Adrenal gland (tissue), 19 donors: ENCODE measurements at regions of chr1 and their contacts with region 1.

Region 1: GRCh38 chr1:52913537-52913936 is 8.0 kb downstream of the ECHDC2 start:
- DNase-seq: no peak
- H3K4me3 ChIP-seq: no peak overlapping the region
- H3K27ac ChIP-seq: no peak overlapping the region
- H3K4me1 ChIP-seq: peaks cover 18 to 21% of the 10 kb centered on the region in 2 donors
- H3K27me3 ChIP-seq: no peaks in the 10 kb centered on the region
- CTCF ChIP-seq: no peak
- POLR2A ChIP-seq: no peak

Region 2: DNA sequence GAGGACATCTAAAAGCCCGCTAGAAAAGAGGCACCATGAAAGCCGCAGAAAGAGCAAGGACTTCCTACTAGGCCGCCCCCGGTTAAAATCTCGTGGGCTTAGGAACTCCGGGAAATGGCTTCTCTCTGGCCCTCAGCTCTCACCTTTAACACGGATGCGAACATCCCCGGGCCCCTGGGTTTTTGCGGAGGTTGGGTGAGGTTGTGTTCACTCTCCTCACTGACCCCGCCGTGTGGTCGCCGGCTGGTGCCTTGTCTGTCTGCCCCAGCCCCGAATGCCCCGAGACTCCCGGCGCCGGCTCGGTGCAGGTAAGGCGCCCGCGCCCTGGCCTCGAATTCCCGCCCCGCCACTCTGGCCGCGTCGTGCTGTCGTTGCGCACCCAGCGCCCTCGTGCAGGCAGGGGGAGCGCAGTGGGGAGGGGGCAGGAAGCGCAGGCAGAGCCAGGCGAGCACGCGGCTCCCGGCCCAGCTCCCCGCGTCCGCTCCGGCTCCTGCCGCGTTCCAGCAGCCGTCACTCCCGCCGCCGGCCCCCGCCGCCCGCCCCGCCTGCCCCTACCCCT is 280.7 kb before region 1 on chr1 and contains the start of gene SHISAL2A:
- intact Hi-C with region 1: no loop called
- DNase-seq: peak in 6 of 7 donors; percentile 29 to 58 (median 40)
- H3K4me3 ChIP-seq: peak within 1 kb of the TSS in 2 of 4 donors; percentile 18 to 59
- H3K27ac ChIP-seq: peak within 1 kb of the TSS in 2 of 5 donors; percentile 17 to 30
- H3K4me1 ChIP-seq: peaks cover 4 to 15% of the 10 kb centered on the region in 2 donors
- H3K27me3 ChIP-seq: peaks cover 13% of the 10 kb centered on the region
- CTCF ChIP-seq: no peak
- POLR2A ChIP-seq: no peak
- total RNA-seq, gene SHISAL2A: 0.11 to 0.79 (median 0.52) TPM in 6 of 9 donors, not detected in the others

Region 3: DNA sequence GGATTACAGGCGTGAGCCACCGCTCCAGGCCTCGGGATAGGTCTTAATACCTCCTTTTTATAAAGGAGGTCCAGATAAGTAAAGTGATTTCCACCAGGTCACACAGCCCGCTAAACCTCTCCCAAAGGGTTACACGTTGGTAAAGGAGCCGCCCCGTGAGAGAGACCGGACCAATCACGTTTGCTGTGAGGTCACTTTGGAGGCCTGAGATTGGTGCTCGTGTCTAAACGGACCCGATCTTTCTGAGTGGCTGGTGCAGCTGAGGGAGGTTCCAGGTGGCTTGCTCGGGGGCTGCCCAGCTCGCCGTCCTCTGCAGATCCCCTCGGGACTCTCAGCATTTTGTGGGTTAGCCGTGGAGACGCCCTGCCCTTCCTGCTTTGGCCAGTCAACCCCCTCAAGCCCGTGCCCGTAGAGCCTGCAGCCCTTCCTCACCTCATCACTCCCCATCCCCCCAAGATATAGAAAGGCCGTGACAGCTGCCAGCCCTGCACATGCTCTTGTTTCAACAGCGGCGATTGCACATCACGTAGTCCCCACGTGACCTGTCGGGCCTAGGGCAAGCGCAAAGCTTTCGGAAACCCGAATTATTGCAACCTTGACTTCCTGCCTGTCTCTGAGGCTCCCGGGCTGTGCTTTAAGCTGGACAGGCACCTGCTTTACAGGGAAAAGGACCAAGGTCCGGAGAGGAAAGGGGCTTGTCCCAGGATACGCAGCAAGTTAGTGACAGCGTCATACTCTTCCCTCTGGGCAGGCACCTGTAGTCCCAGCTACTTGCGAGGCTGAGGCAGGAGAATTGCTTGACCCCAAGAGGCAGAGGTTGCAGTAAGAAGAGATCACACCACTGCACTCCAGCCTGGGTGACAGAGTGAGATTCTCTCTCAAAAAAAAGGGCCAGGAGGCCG is 210.4 kb before region 1 on chr1:
- intact Hi-C with region 1: loop called in 1 of 2 experiments (anchors 10 kb)
- DNase-seq: peak; percentile 91 to 98 (median 97)
- H3K4me3 ChIP-seq: peak overlapping the region in 3 of 4 donors; percentile 7 to 61 (median 39)
- H3K27ac ChIP-seq: peak overlapping the region; percentile 80 to 95 (median 92)
- H3K4me1 ChIP-seq: peaks cover 0 to 11% of the 10 kb centered on the region in 2 donors
- H3K27me3 ChIP-seq: no peaks in the 10 kb centered on the region
- CTCF ChIP-seq: peak in 1 of 6 experiments; percentile 10
- POLR2A ChIP-seq: peak; percentile 4 to 72

Region 4: GRCh38 chr1:52850951-52851350 is 62.6 kb before region 1 on chr1:
- intact Hi-C with region 1: no loop called
- DNase-seq: no peak
- H3K4me3 ChIP-seq: no peak overlapping the region
- H3K27ac ChIP-seq: no peak overlapping the region
- H3K4me1 ChIP-seq: no peaks in the 10 kb centered on the region
- H3K27me3 ChIP-seq: no peaks in the 10 kb centered on the region
- CTCF ChIP-seq: no peak
- POLR2A ChIP-seq: no peak